Activated CD4-positive, alpha-beta T cell treated with anti-CD3 and anti-CD28 coated beads for 36 hours (primary cell): ENCODE measurements at regions of chrX and their contacts with region 1.

Region 1: GRCh38 chrX:124488412-124489161 is 142.2 kb downstream of the SH2D1A start:
- DNase-seq: no peak
- ATAC-seq: no peak
- H3K4me3 Mint-ChIP-seq: no peak overlapping the region
- H3K27ac Mint-ChIP-seq: no peak overlapping the region
- H3K4me1 Mint-ChIP-seq: no peaks in the 10 kb centered on the region
- H3K27me3 Mint-ChIP-seq: no peaks in the 10 kb centered on the region

Region 2: DNA sequence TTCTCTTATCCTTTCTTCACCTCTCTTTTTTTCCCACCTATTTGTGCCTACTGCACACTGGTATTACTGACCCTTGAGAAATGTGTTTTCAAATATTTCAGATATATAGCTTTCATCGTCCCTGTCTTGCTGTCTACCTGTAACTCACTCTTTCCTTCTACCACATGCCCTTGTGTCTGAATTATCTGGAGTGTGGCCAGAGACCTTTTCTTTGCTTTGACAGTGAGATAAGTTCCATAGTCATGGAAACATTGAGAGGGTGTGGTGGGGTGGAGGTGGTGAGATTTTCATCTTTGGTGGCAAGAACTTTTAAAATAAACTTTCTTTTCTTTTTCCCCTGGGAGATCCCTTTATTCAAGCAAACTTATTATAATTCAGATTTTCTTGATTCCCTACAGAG is 46.6 kb before region 1 on chrX:
- CTCF ChIA-PET with region 1: no interaction called
- POLR2A ChIA-PET with region 1: no interaction called
- intact Hi-C with region 1: loop called in 1 of 2 experiments (anchors 1 kb)
- DNase-seq: peak; percentile 5
- ATAC-seq: no peak
- H3K4me3 Mint-ChIP-seq: no peak overlapping the region
- H3K27ac Mint-ChIP-seq: no peak overlapping the region
- H3K4me1 Mint-ChIP-seq: peaks cover 34% of the 10 kb centered on the region
- H3K27me3 Mint-ChIP-seq: no peaks in the 10 kb centered on the region